Sigmoid colon (tissue), 7 donors: ENCODE measurements at regions of chr11 and their contacts with region 1.

Region 1: GRCh38 chr11:10792398-10792975 is 16.2 kb downstream of the EIF4G2 start:
- DNase-seq: peak; percentile 92
- H3K4me3 ChIP-seq: peak overlapping the region in 1 of 4 donors; percentile 8
- H3K27ac ChIP-seq: no peak overlapping the region
- H3K4me1 ChIP-seq: peaks cover 0 to 10% (median 3%) of the 10 kb centered on the region in 4 donors
- H3K27me3 ChIP-seq: no peaks in the 10 kb centered on the region
- CTCF ChIP-seq: peak; percentile 84 to 94 (median 92)
- EP300 ChIP-seq: no peak
- POLR2A ChIP-seq: no peak

Region 2: GRCh38 chr11:10920205-10920604 is 127.7 kb after region 1 on chr11:
- intact Hi-C with region 1: no loop called
- DNase-seq: no peak
- H3K4me3 ChIP-seq: no peak overlapping the region
- H3K27ac ChIP-seq: no peak overlapping the region
- H3K4me1 ChIP-seq: peaks cover 0 to 26% (median 12%) of the 10 kb centered on the region in 4 donors
- H3K27me3 ChIP-seq: no peaks in the 10 kb centered on the region
- CTCF ChIP-seq: no peak
- EP300 ChIP-seq: no peak
- POLR2A ChIP-seq: no peak

Region 3: GRCh38 chr11:11022125-11022730 is 229.7 kb after region 1 on chr11:
- intact Hi-C with region 1: loop called (anchors 2 kb)
- DNase-seq: no peak
- H3K4me3 ChIP-seq: no peak overlapping the region
- H3K27ac ChIP-seq: no peak overlapping the region
- H3K4me1 ChIP-seq: no peaks in the 10 kb centered on the region
- H3K27me3 ChIP-seq: no peaks in the 10 kb centered on the region
- CTCF ChIP-seq: peak in 3 of 4 experiments; percentile 39 to 47 (median 43)
- EP300 ChIP-seq: no peak
- POLR2A ChIP-seq: no peak

Region 4: GRCh38 chr11:11451501-11452005 is 659.1 kb after region 1 on chr11:
- intact Hi-C with region 1: no loop called
- DNase-seq: no peak
- H3K4me3 ChIP-seq: no peak overlapping the region
- H3K27ac ChIP-seq: peak overlapping the region in 3 of 4 donors; percentile 59 to 78 (median 66)
- H3K4me1 ChIP-seq: peaks cover 0 to 62% (median 27%) of the 10 kb centered on the region in 4 donors
- H3K27me3 ChIP-seq: no peaks in the 10 kb centered on the region
- CTCF ChIP-seq: no peak
- EP300 ChIP-seq: no peak
- POLR2A ChIP-seq: no peak